Activated CD4-positive, alpha-beta T cell treated with anti-CD3 and anti-CD28 coated beads, Interleukin-2, amount 10 ng/mL, durations not matched to agents 24 days and 14 days (primary cell): ENCODE measurements at regions of chr17 and their contacts with region 1.

Region 1: GRCh38 chr17:5100832-5101231 is 10.8 kb downstream of the ZNF232 start:
- DNase-seq: no peak
- H3K4me3 Mint-ChIP-seq: no peak overlapping the region
- H3K27ac Mint-ChIP-seq: no peak overlapping the region
- H3K4me1 Mint-ChIP-seq: no peaks in the 10 kb centered on the region
- H3K27me3 Mint-ChIP-seq: peaks cover 13% of the 10 kb centered on the region

Region 2: GRCh38 chr17:5164436-5164835 is 63.6 kb after region 1 on chr17:
- intact Hi-C with region 1: loop called (anchors 10 kb)
- DNase-seq: no peak
- H3K4me3 Mint-ChIP-seq: no peak overlapping the region
- H3K27ac Mint-ChIP-seq: no peak overlapping the region
- H3K4me1 Mint-ChIP-seq: no peaks in the 10 kb centered on the region
- H3K27me3 Mint-ChIP-seq: peaks cover 12% of the 10 kb centered on the region

Region 3: DNA sequence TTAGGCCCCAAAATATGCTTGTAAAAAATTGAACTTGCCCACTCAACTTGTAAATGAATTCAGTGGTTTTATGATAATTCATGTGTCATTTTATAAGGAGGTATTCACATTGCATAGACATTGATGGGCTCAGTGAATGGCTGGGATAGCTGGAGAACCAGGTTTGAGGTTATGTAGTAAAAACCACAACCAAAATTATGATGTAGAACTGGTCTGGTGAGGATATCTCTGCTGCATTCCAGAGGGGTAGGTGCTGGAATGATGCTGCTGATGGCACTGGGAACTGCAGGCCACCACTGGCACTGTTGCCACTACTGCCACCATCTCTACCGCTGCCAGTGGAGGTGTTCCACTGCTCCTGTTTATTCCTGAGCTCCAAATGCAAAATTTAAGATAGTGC is 159.7 kb after region 1 on chr17:
- intact Hi-C with region 1: no loop called
- DNase-seq: no peak
- H3K4me3 Mint-ChIP-seq: no peak overlapping the region
- H3K27ac Mint-ChIP-seq: no peak overlapping the region
- H3K4me1 Mint-ChIP-seq: no peaks in the 10 kb centered on the region
- H3K27me3 Mint-ChIP-seq: peaks cover 2% of the 10 kb centered on the region

Region 4: GRCh38 chr17:5912991-5913531 is 812.2 kb after region 1 on chr17:
- intact Hi-C with region 1: no loop called
- DNase-seq: no peak
- H3K4me3 Mint-ChIP-seq: no peak overlapping the region
- H3K27ac Mint-ChIP-seq: no peak overlapping the region
- H3K4me1 Mint-ChIP-seq: no peaks in the 10 kb centered on the region
- H3K27me3 Mint-ChIP-seq: no peaks in the 10 kb centered on the region